ENCODE measurements at regions of chr1 and their contacts with region 1.

Region 1: DNA sequence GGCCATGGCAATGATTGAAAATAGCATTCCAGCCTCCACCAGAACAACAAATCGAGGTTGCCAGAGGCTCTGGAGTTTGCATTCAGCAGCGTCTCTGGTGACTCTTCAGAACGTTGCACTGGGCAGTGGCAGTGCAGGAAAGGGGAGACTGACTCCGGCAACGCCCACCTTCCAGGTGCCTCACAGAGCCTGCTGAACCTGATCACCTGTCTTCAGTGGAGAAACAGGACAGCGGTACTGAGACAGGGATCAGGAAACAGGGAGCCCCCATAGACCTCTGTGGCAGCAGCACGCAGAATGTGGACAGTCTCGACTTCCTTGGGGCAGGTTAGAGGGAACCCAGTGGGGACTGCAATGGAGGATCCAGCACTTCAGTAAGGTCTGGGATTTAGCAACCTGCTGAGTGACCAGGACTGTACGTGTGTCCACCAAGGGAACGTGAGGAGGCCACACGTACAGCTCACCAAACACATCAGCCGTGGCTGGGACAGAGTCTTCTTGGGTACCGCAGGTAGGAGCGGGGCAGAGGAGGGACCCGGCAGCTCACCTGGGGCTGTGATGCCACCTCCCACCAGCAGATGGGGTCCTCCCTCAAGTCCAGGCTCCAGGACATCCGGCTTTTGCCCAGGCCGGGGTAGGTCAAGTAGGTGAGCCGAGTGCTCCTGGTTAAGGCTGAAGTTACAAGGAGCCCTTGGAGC is 128.6 kb downstream of the PRDM2 start:
- DNase-seq: no peak
- ATAC-seq: peak; percentile 97
- H3K4me3 ChIP-seq: no peak overlapping the region
- H3K27ac ChIP-seq: no peak overlapping the region
- H3K4me1 ChIP-seq: no peaks in the 10 kb centered on the region
- H3K27me3 ChIP-seq: no peaks in the 10 kb centered on the region; a peak in 1 of 4 replicates
- CTCF ChIP-seq: peak; percentile 66 to 72 (median 66); a peak in 5 of 6 replicates
- EP300 ChIP-seq: no peak
- POLR2A ChIP-seq: no peak
- RAD21 ChIP-seq: peak; percentile 48

Region 2: DNA sequence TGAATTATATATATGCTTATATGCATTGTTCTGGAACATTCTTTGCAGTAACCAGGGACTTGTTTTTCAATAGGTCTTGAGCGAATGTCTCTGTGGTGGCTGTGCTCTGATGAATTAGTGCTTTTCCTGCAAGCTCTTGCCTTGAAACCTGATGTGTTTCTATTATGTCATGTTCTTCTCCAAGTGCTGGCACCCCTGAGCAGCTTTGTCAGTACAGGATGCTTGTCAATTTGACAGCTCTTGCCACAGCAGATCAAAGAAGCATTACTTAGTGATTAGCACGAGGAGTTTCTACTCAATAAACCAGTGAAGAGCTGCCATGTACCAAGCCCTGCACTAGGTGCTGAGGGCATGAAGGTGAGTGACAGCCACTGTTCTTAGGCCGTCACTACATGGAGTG is 43.3 kb after region 1 on chr1:
- CTCF ChIA-PET with region 1: no interaction called
- POLR2A ChIA-PET with region 1: no interaction called
- RAD21 ChIA-PET with region 1: no interaction called
- SMC1A ChIA-PET with region 1: no interaction called
- in situ Hi-C with region 1: no loop called
- intact Hi-C with region 1: no loop called
- DNase-seq: no peak
- ATAC-seq: no peak
- H3K4me3 ChIP-seq: no peak overlapping the region
- H3K27ac ChIP-seq: no peak overlapping the region
- H3K4me1 ChIP-seq: no peaks in the 10 kb centered on the region
- H3K27me3 ChIP-seq: no peaks in the 10 kb centered on the region
- CTCF ChIP-seq: no peak
- EP300 ChIP-seq: no peak
- POLR2A ChIP-seq: no peak
- RAD21 ChIP-seq: no peak

Region 3: DNA sequence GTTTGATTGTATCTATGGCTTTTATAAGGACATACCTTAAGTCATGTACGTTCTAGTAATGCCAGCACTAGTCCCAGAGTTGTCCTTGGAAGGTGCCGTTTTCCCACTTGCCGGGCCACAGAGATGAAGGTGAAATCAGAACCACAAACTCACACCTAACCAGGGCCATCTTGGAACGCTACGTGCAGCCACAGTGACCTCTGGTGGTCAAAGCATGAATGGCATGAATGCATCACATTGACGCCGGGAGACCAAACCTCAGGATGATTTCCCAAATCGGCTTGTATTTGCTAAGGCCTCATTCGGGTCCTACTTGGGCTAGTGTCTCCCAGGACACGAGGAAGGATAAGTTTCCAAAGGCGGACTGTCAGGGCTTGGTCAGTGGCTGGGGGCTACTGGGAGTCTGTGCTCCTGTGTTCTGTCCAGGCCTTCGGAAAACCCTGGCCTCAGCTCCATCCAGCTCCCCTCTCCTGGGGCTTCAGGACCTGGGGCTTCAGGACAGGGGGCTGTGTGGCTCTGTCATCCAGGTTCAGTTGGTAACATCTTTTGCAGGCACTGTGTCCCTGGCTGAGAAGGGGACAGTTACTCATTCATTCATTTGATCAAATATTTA is 131.9 kb after region 1 on chr1:
- CTCF ChIA-PET with region 1: interaction called, 10 read pairs
- POLR2A ChIA-PET with region 1: no interaction called
- RAD21 ChIA-PET with region 1: no interaction called
- SMC1A ChIA-PET with region 1: interaction called, 6 read pairs
- in situ Hi-C with region 1: loop called (anchors 5 kb)
- intact Hi-C with region 1: loop called (anchors 1 kb)
- DNase-seq: peak; percentile 17
- ATAC-seq: peak; percentile 85
- H3K4me3 ChIP-seq: no peak overlapping the region
- H3K27ac ChIP-seq: no peak overlapping the region
- H3K4me1 ChIP-seq: no peaks in the 10 kb centered on the region
- H3K27me3 ChIP-seq: no peaks in the 10 kb centered on the region; a peak in 1 of 4 replicates
- CTCF ChIP-seq: peak; percentile 94 to 96 (median 95)
- EP300 ChIP-seq: no peak
- POLR2A ChIP-seq: no peak
- RAD21 ChIP-seq: peak; percentile 96